Transverse colon (tissue), 4 donors: ENCODE measurements at regions of chr6 and their contacts with region 1.

Region 1: DNA sequence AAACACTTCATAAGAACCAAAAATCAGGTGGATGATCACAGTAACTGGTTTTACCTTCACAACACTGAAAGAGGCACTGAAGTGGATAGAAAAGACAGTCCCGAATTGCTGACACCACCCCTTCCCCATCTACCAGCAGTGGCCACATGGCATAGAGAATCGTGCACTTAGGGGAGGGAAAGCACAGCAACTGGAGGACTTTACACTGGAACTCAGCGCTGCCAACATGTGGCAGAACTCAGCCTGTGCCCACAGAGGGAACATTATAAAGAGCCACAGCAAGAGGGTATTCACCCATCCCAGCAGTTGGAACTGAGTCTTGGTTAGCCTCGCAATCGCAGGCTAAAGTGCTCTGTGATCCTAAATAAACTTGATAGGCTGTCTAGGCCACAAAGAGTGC is 6.5 kb upstream of the KIAA1586 start:
- DNase-seq: no peak
- H3K4me3 ChIP-seq: no peak overlapping the region
- H3K27ac ChIP-seq: no peak overlapping the region
- H3K4me1 ChIP-seq: no peaks in the 10 kb centered on the region
- H3K27me3 ChIP-seq: peaks cover 13% of the 10 kb centered on the region
- CTCF ChIP-seq: no peak
- EP300 ChIP-seq: no peak
- POLR2A ChIP-seq: no peak

Region 2: GRCh38 chr6:57064809-57065208 is 24.8 kb after region 1 on chr6:
- in situ Hi-C with region 1: no loop called
- intact Hi-C with region 1: no loop called
- DNase-seq: no peak
- H3K4me3 ChIP-seq: no peak overlapping the region
- H3K27ac ChIP-seq: no peak overlapping the region
- H3K4me1 ChIP-seq: no peaks in the 10 kb centered on the region
- H3K27me3 ChIP-seq: no peaks in the 10 kb centered on the region
- CTCF ChIP-seq: no peak
- EP300 ChIP-seq: no peak
- POLR2A ChIP-seq: no peak

Region 3: DNA sequence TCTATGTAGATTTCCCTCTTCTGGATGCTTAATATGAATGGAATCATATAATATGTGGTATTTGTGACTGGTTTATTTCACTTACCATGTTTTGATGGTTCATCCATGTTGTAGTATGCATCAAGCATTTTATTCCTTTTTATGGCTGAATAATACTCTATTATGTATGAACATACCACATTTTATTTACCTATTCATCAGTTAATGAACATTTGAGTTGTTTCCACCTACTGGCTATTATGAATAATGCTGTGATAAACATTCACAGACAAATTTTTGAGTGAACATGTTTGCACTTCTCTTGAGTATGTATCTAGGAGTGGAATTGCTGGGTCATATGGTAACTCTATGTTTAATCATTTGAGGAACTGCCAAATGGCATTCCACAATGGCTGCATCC is 35.1 kb after region 1 on chr6:
- in situ Hi-C with region 1: no loop called
- intact Hi-C with region 1: no loop called
- DNase-seq: no peak
- H3K4me3 ChIP-seq: no peak overlapping the region
- H3K27ac ChIP-seq: no peak overlapping the region
- H3K4me1 ChIP-seq: no peaks in the 10 kb centered on the region
- H3K27me3 ChIP-seq: no peaks in the 10 kb centered on the region
- CTCF ChIP-seq: no peak
- EP300 ChIP-seq: no peak
- POLR2A ChIP-seq: no peak

Region 4: DNA sequence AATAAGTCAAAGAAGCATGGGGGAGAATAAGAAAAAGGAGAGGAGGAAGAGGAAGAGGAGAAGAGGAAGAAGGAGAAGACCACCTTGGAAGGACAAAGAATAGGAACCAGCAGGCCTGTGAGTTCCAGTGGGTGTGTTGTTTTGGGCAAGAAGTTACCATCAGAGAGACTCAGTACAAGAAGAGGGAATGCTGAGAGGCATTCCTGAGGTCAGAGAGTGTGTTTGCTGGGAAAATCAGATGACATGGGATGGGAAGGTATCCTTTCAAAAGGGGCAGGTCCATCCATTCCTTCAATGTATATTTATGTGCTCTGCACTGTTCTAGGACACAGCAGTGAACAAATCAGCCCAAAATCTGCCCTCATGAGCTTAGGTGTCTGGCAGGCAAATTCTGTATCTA is 236.9 kb after region 1 on chr6:
- in situ Hi-C with region 1: no loop called
- intact Hi-C with region 1: no loop called
- DNase-seq: no peak
- H3K4me3 ChIP-seq: no peak overlapping the region
- H3K27ac ChIP-seq: no peak overlapping the region
- H3K4me1 ChIP-seq: peaks cover 0 to 3% (median 0%) of the 10 kb centered on the region in 4 donors
- H3K27me3 ChIP-seq: no peaks in the 10 kb centered on the region
- CTCF ChIP-seq: no peak
- EP300 ChIP-seq: no peak
- POLR2A ChIP-seq: no peak

Region 5: GRCh38 chr6:57342148-57342669 is 302.2 kb after region 1 on chr6:
- in situ Hi-C with region 1: loop called in 1 of 4 experiments (anchors 25 kb)
- intact Hi-C with region 1: no loop called
- DNase-seq: no peak
- H3K4me3 ChIP-seq: no peak overlapping the region
- H3K27ac ChIP-seq: no peak overlapping the region
- H3K4me1 ChIP-seq: no peaks in the 10 kb centered on the region
- H3K27me3 ChIP-seq: no peaks in the 10 kb centered on the region
- CTCF ChIP-seq: no peak
- EP300 ChIP-seq: no peak
- POLR2A ChIP-seq: no peak